ENCODE measurements at regions of chr5 and their contacts with region 1.

Region 1: GRCh38 chr5:94740286-94740685 is 121.8 kb downstream of the SLF1 start:
- H3K4me3 ChIP-seq: no peak overlapping the region
- H3K27ac ChIP-seq: no peak overlapping the region
- H3K4me1 ChIP-seq: no peaks in the 10 kb centered on the region
- CTCF ChIP-seq: no peak

Region 2: DNA sequence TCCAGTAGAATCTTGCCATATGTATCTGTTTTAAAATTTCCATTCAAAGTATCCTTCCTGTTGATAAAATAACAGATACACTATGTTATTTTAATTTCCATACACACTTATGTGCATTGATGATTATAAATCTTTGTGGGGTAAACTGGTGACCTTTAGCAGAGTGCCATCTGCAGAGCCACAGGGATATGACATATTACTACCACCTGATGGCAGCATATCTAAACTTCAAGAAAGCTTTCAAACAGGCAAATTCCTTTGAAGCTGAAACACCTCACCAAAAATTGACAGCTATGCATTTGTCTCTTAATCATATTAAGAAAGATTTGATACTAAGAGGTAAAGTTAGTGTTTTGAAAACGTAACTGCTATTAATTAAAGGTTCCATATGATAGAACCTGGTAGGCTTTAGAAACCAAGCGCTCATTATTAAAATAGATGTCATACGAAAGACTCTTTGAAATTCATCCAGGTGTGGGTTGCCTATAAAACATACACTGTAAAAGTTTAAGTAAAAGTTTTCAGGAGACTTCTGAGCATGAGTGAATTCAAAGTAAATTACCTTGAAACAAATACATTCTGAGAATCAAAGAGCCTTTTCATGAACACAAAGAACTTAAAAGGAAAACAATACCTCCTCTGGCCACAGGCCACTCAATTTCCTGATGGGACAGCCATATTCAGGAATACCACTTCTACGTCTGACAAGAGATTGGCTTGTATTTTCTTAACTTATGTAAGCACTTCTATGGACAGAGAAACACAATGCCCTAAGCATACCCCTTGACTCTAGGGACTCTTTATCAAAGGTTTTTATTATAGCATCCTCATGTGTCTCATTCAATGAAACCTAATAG is 215.2 kb before region 1 on chr5:
- CTCF ChIA-PET with region 1: interaction called, 20 read pairs
- POLR2A ChIA-PET with region 1: no interaction called
- H3K4me3 ChIP-seq: no peak overlapping the region
- H3K27ac ChIP-seq: no peak overlapping the region
- H3K4me1 ChIP-seq: no peaks in the 10 kb centered on the region
- CTCF ChIP-seq: no peak

Region 3: DNA sequence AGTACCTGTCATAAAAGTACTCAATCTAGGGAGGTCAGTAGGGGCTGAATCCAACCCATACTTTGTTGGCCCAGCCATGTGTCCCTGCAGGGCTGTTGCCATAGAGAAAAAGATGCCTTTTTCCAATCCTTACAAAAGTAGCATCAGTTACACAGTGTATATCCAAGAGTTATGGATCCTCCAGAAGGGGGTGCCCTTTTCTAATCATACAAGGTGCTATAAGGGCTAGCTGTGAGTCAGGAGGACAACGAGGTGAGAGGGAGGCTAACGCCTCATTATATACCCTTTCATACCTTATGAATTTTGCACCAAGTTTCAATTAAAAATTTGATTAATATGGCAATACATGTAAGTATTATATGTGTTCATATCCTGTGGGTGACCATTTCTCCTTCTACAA is 126.7 kb before region 1 on chr5:
- CTCF ChIA-PET with region 1: interaction called, 21 read pairs
- POLR2A ChIA-PET with region 1: interaction called, 4 read pairs
- H3K4me3 ChIP-seq: no peak overlapping the region
- H3K27ac ChIP-seq: no peak overlapping the region
- H3K4me1 ChIP-seq: peaks cover 9% of the 10 kb centered on the region; the same call in 1 of the 2 replicates
- CTCF ChIP-seq: no peak

Region 4: GRCh38 chr5:94761786-94762185 is 21.5 kb after region 1 on chr5:
- CTCF ChIA-PET with region 1: interaction called, 11 read pairs
- POLR2A ChIA-PET with region 1: no interaction called
- H3K4me3 ChIP-seq: no peak overlapping the region
- H3K27ac ChIP-seq: no peak overlapping the region
- H3K4me1 ChIP-seq: no peaks in the 10 kb centered on the region
- CTCF ChIP-seq: no peak

Measured in HEK293 (cell line).